HAP-1 (cell line): ENCODE measurements at regions of chr16 and their contacts with region 1.

Region 1: GRCh38 chr16:8567750-8568617 is 22.3 kb downstream of the TMEM114 start:
- DNase-seq: peak; percentile 89 to 91
- H3K4me3 ChIP-seq: no peak overlapping the region
- H3K4me1 ChIP-seq: peaks cover 17% of the 10 kb centered on the region
- H3K27me3 ChIP-seq: no peaks in the 10 kb centered on the region

Region 2: GRCh38 chr16:8655184-8655717 is 87.3 kb after region 1 on chr16:
- in situ Hi-C with region 1: loop called (anchors 5 kb)
- DNase-seq: peak; percentile 34 to 54
- H3K4me3 ChIP-seq: no peak overlapping the region
- H3K4me1 ChIP-seq: no peaks in the 10 kb centered on the region
- H3K27me3 ChIP-seq: no peaks in the 10 kb centered on the region; the same call in 1 of the 2 replicates

Region 3: GRCh38 chr16:8720080-8720966 is 152.3 kb after region 1 on chr16:
- in situ Hi-C with region 1: no loop called
- DNase-seq: peak; percentile 52 to 77
- H3K4me3 ChIP-seq: no peak overlapping the region
- H3K4me1 ChIP-seq: no peaks in the 10 kb centered on the region; the same call in 1 of the 2 replicates
- H3K27me3 ChIP-seq: no peaks in the 10 kb centered on the region

Region 4: DNA sequence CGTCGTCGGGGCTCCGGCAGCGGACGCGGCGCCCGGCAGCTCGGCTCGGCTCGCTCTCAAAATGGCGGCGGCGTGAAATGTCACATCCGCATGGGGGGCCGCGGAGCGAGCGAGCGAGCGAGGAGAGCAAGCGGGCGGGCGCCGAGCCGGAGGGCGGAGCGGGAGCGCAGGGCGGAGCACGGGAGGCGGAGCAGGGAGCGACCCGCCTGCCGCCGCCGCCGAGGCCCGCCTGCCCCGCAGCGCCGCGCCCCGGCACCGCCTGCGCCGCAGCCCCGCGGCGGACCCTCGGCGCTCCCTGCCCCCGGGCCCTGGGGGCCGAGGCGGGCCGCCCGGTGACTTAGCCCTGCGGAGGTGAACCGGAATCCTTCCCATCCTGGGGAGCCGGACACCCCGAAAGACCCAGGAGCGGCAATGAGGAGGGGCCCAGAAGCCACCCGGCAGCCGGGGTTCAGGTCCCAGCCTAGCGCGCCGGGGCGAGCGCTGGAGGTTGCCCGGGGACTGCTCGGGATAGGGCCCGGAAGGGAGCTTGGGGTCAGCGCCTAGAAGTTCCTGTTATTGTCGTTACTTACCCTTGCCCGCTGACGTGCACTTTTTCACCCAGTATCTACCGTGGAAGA is 395.9 kb after region 1 on chr16 and contains the start of gene USP7:
- in situ Hi-C with region 1: no loop called
- DNase-seq: peak; percentile 83 to 93
- H3K4me3 ChIP-seq: peak within 1 kb of the TSS; percentile 77
- H3K4me1 ChIP-seq: peaks cover 37% of the 10 kb centered on the region
- H3K27me3 ChIP-seq: no peaks in the 10 kb centered on the region